ENCODE measurements at regions of chr15 and their contacts with region 1.

Region 1: GRCh38 chr15:68252925-68253534 is 23.5 kb upstream of the CLN6 start:
- DNase-seq: no peak
- H3K4me3 ChIP-seq: no peak overlapping the region
- H3K27ac ChIP-seq: no peak overlapping the region
- H3K4me1 ChIP-seq: peaks cover 0 to 18% (median 14%) of the 10 kb centered on the region in 4 donors
- H3K27me3 ChIP-seq: no peaks in the 10 kb centered on the region
- CTCF ChIP-seq: peak; percentile 69 to 86 (median 80)
- EP300 ChIP-seq: no peak
- POLR2A ChIP-seq: no peak

Region 2: DNA sequence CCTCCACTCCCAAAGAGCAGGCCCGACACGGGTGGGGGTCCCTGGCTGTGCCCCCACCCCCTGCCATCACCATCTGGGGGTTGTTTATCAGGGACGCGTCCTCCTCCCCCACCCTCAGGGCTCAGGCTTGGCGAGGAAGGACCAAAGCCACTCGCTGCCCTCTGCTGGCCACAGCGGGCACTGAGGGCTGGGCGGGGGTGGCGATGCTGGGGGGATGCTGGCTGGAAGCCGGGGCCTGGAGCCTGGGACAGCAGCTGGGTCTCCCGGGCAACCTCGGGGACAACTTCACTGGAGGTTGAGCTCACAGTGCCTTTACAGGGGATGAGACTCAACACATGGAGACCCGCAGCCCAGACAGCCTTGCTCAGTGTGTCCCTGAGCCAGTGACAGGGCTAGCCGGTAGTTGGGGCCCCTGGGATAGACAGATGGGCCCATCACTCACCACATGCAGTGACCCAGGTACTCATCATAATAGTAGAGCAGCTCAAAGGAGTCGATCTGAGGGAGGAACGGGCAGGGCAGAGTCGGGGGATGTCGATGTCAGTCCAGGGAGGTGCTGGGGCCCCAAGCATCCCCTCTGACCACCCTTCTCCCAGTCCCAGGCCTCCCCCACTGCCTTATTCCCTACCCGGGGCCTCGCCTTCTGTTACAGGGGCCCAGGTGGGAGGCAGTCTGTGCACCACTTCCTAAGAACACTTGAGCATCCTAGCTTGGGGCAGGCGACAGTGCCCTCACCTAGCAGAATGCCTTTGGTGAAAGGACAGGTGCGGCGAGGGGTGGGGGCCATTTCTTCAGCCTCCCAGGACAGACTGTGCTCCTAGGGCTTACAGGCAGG is 42.0 kb before region 1 on chr15:
- intact Hi-C with region 1: no loop called
- DNase-seq: peak; percentile 87
- H3K4me3 ChIP-seq: peak overlapping the region in 3 of 4 donors; percentile 27 to 37 (median 35)
- H3K27ac ChIP-seq: peak overlapping the region in 3 of 4 donors; percentile 32 to 60 (median 54)
- H3K4me1 ChIP-seq: peaks cover 0 to 20% (median 18%) of the 10 kb centered on the region in 4 donors
- H3K27me3 ChIP-seq: no peaks in the 10 kb centered on the region
- CTCF ChIP-seq: peak; percentile 93 to 97 (median 94)
- EP300 ChIP-seq: no peak
- POLR2A ChIP-seq: no peak

Region 3: GRCh38 chr15:68277603-68278344 is 24.7 kb after region 1 on chr15 and contains the start of gene FEM1B:
- intact Hi-C with region 1: loop called (anchors 2 kb)
- DNase-seq: peak; percentile 97
- H3K4me3 ChIP-seq: peak within 1 kb of the TSS; percentile 68 to 92 (median 80)
- H3K27ac ChIP-seq: peak within 1 kb of the TSS; percentile 98 to 99 (median 98)
- H3K4me1 ChIP-seq: peaks cover 0 to 69% (median 47%) of the 10 kb centered on the region in 4 donors
- H3K27me3 ChIP-seq: no peaks in the 10 kb centered on the region
- CTCF ChIP-seq: no peak
- EP300 ChIP-seq: peak in 2 of 4 donors; percentile 26 to 36
- POLR2A ChIP-seq: peak; percentile 54 to 56
- total RNA-seq, gene FEM1B: 54.7 to 64.2 (median 62.8) TPM

Region 4: DNA sequence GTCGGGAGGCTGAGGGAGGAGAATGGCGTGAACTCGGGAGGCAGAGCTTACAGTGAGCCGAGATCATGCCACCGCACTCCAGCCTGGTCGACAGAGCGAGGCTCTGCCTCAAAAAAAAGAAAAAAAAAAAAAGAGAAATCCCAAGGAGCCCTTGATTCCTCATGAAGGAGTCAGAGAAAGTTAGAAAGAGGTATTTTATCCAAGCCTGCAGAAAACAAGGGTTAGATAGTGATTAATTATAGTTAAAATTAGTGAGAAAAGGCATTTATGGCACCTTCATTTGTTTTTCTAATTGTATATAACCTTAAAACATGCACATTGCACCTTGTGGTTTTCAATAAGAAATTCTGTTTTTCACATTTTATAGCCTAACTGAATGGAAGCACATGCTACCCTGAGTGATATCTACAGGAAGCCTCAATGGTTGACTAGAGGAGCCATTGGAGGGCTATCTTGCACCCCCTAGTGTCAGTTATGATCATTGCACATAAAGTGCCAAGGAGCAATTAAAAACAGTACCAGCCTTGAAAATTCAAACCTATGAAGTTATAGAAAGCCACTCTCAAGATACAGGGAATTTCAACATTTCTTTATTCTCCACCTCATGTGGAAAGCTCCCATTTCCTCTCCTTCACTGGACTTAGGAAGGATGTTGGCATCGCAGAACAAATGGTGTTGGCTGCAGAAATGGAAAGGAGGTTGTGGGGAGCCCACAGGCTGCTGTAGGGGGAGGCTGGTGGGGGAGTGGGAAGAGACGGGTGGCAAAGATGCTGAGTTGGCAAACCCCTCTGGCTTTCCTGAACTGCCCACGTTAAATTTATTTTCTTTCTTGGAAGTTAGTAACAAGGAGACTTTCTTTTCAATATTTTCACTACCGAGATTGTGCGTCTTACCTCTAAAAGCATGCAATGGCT is 130.4 kb after region 1 on chr15:
- intact Hi-C with region 1: loop called (anchors 2 kb)
- DNase-seq: peak; percentile 29
- H3K4me3 ChIP-seq: no peak overlapping the region
- H3K27ac ChIP-seq: peak overlapping the region in 1 of 4 donors; percentile 52
- H3K4me1 ChIP-seq: peaks cover 0 to 14% (median 5%) of the 10 kb centered on the region in 4 donors
- H3K27me3 ChIP-seq: no peaks in the 10 kb centered on the region
- CTCF ChIP-seq: peak; percentile 33 to 75 (median 54)
- EP300 ChIP-seq: no peak
- POLR2A ChIP-seq: no peak

Region 5: GRCh38 chr15:68672781-68673205 is 419.8 kb after region 1 on chr15:
- intact Hi-C with region 1: loop called (anchors 10 kb)
- DNase-seq: peak; percentile 45
- H3K4me3 ChIP-seq: no peak overlapping the region
- H3K27ac ChIP-seq: no peak overlapping the region
- H3K4me1 ChIP-seq: no peaks in the 10 kb centered on the region
- H3K27me3 ChIP-seq: no peaks in the 10 kb centered on the region
- CTCF ChIP-seq: no peak
- EP300 ChIP-seq: no peak
- POLR2A ChIP-seq: no peak

Measured in sigmoid colon (tissue), 7 donors.